ENCODE measurements at regions of chr1 and their contacts with region 1.

Region 1: GRCh38 chr1:110766025-110766647 is 91.4 kb upstream of the KCNA3 start:
- DNase-seq: peak; percentile 50
- H3K4me3 ChIP-seq: no peak overlapping the region
- H3K27ac ChIP-seq: no peak overlapping the region
- H3K4me1 ChIP-seq: no peaks in the 10 kb centered on the region
- H3K27me3 ChIP-seq: no peaks in the 10 kb centered on the region
- CTCF ChIP-seq: peak; percentile 60 to 75
- POLR2A ChIP-seq: no peak

Region 2: DNA sequence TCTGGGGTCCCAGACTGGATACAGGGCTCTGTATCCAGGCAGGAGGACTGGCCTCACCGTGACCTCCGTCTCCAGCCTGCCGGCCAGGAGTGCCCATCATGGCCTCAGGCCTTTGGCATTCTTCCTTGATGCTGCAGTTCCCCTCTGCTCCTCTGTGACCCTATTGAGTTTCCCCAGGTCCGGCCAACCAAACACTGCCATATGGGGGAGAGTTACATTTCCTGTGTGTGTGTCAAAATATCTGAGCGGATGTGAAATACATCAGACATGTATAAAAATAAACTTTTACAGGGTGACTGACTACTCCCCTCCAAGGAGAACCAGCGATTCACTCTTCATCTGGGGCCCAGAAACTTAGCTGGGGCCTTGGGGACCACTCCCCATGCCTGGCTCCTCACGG is 664.1 kb before region 1 on chr1:
- CTCF ChIA-PET with region 1: no interaction called
- POLR2A ChIA-PET with region 1: no interaction called
- dilution Hi-C with region 1: no loop called
- intact Hi-C with region 1: no loop called
- DNase-seq: no peak
- H3K4me3 ChIP-seq: no peak overlapping the region
- H3K27ac ChIP-seq: no peak overlapping the region
- H3K4me1 ChIP-seq: no peaks in the 10 kb centered on the region
- H3K27me3 ChIP-seq: peaks cover 6 to 8% of the 10 kb centered on the region in 2 experiments
- CTCF ChIP-seq: no peak
- POLR2A ChIP-seq: no peak

Region 3: DNA sequence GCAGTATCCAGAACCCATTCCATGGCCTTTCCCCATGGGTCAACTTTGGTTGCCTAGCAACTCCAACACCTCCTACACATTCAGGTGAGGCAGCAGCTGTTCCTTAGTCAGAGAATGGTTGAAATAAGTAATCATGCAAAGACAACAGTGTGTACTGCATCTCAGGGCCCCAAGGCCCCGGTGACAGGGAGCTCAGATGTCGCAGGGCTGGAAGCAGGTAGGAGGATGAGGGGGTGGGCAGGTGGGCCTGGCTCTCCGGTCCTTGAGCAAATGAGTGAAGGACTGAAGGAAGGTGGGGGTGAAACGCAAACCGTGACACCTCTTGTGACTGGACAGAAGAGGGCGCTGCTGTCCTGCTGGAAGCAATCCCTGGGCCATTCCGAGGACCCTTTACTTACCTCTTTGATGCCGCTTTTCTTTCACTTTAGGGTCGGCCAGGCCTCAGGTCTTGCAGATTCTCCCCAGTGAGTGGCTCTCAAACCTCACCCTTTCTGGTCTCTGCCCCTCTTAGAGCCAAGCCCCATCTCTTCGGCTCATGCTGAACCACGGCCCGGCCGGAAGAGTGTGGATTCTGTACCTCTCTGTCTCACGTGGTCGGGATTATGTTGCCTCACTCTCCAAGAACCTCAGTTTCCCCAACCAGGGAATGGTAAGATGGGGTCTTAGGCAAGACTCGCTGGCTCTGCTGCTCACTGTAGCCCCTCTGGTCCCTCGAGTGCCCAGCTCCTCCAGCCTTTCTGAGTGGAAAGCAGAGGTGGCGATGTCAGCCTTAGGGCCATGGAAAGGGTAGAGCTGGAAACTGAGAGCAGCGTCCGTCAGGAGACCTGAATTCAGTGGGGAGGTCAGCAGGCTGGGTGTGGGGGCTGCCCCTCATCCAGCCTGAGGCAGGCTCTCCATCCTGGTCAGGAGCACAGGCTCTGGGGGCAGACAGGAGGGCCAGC is 241.6 kb before region 1 on chr1:
- CTCF ChIA-PET with region 1: interaction called, 12 read pairs
- POLR2A ChIA-PET with region 1: no interaction called
- dilution Hi-C with region 1: no loop called
- intact Hi-C with region 1: loop called (anchors 2 kb)
- DNase-seq: peak; percentile 41
- H3K4me3 ChIP-seq: no peak overlapping the region
- H3K27ac ChIP-seq: no peak overlapping the region
- H3K4me1 ChIP-seq: no peaks in the 10 kb centered on the region
- H3K27me3 ChIP-seq: peaks cover 3 to 7% of the 10 kb centered on the region in 2 experiments
- CTCF ChIP-seq: peak; percentile 50 to 79
- POLR2A ChIP-seq: no peak

Region 4: DNA sequence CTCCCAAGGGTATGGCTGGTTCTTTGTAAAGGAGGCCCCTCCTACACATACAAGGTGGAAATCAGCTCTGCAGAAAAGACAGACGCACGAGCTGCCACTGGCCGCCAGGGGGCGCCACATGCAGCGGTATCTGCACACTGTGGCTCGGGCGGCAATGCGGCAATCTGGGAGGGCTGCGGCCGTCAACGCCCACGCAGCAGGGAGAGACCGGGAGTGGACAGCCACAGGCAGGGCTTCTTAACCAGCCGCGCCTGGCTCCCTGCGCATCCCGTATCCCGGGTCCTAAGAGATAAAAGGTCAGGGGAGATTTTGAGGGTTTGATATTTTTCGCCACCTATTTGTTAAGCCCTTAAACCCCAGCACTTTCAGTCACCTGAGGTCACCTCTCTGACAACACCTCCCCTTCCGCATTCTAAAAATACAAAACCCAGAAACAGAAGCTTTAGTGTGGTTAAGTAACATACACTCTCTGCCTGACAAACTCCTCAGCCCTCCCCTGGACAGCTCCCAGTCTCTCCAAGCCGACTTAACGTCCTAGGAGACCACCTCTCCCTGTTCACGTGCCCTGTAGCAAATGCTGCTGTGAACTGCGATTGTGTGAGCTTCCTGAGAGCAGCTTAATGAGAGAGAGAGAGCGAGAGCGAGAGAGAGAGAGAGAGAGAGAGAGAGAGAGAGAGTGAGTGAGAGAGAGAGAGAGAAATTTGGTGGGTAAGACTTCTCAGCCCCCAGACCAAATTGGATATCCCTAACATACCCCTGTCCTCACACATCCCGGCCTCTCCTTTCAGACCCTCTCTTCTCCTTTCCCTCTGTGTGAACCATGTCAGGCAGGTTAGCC is 146.5 kb before region 1 on chr1:
- CTCF ChIA-PET with region 1: interaction called, 62 read pairs
- POLR2A ChIA-PET with region 1: no interaction called
- dilution Hi-C with region 1: no loop called
- intact Hi-C with region 1: loop called (anchors 1 kb)
- DNase-seq: peak; percentile 60
- H3K4me3 ChIP-seq: no peak overlapping the region
- H3K27ac ChIP-seq: no peak overlapping the region
- H3K4me1 ChIP-seq: no peaks in the 10 kb centered on the region
- H3K27me3 ChIP-seq: peaks cover 9 to 15% of the 10 kb centered on the region in 2 experiments
- CTCF ChIP-seq: peak; percentile 92 to 98
- POLR2A ChIP-seq: no peak

Region 5: GRCh38 chr1:110746579-110747160 is 19.5 kb before region 1 on chr1:
- CTCF ChIA-PET with region 1: interaction called, 11 read pairs
- POLR2A ChIA-PET with region 1: no interaction called
- dilution Hi-C with region 1: no loop called
- intact Hi-C with region 1: no loop called
- DNase-seq: peak; percentile 51
- H3K4me3 ChIP-seq: no peak overlapping the region
- H3K27ac ChIP-seq: no peak overlapping the region
- H3K4me1 ChIP-seq: no peaks in the 10 kb centered on the region
- H3K27me3 ChIP-seq: no peaks in the 10 kb centered on the region
- CTCF ChIP-seq: no peak
- POLR2A ChIP-seq: no peak

Region 6: DNA sequence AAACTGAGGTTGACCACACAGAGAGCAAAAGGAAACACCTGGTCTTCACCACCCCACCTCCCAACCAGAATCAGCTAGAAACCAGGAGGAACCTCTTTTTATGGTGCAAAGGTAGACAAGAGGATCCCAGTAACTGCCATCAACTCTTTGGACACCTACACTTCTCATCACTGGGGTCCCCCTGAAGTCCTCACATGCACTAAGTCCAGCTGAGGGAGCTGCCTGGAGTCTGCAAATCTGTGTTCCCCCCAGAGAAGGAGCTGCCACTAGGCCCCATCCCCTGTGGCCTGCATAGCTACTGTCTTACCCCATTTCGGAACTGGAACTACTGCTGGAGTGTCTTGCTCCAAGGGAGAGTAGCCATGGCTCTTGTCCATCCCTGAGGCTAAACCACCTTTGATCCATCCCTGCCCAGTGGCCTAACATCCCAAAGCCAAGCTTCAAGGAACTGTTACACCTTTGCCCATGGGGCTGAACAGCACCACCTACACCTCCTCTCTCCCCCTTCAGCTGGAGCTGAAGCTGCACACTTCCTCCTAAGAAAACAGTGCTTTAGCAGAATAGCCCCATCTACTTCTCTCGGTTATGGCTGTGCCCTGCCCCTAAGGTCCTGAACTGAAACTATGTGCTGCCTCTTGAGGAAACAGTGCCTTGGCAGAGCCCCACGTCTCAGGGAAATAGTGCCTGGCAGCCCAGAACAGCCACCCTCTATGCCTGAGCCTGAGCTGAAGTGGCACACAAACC is 21.4 kb after region 1 on chr1:
- CTCF ChIA-PET with region 1: interaction called, 38 read pairs
- POLR2A ChIA-PET with region 1: no interaction called
- dilution Hi-C with region 1: no loop called
- intact Hi-C with region 1: loop called (anchors 1 kb)
- DNase-seq: no peak
- H3K4me3 ChIP-seq: no peak overlapping the region
- H3K27ac ChIP-seq: no peak overlapping the region
- H3K4me1 ChIP-seq: no peaks in the 10 kb centered on the region
- H3K27me3 ChIP-seq: no peaks in the 10 kb centered on the region
- CTCF ChIP-seq: no peak
- POLR2A ChIP-seq: no peak

Region 7: GRCh38 chr1:110816930-110817329 is 50.8 kb after region 1 on chr1:
- CTCF ChIA-PET with region 1: no interaction called
- POLR2A ChIA-PET with region 1: no interaction called
- dilution Hi-C with region 1: no loop called
- intact Hi-C with region 1: no loop called
- DNase-seq: no peak
- H3K4me3 ChIP-seq: no peak overlapping the region
- H3K27ac ChIP-seq: no peak overlapping the region
- H3K4me1 ChIP-seq: no peaks in the 10 kb centered on the region
- H3K27me3 ChIP-seq: no peaks in the 10 kb centered on the region
- CTCF ChIP-seq: no peak
- POLR2A ChIP-seq: no peak

Measured in endothelial cell of umbilical vein (primary cell).